WTC11 (cell line): ENCODE measurements at regions of chr10 and their contacts with region 1.

Region 1: DNA sequence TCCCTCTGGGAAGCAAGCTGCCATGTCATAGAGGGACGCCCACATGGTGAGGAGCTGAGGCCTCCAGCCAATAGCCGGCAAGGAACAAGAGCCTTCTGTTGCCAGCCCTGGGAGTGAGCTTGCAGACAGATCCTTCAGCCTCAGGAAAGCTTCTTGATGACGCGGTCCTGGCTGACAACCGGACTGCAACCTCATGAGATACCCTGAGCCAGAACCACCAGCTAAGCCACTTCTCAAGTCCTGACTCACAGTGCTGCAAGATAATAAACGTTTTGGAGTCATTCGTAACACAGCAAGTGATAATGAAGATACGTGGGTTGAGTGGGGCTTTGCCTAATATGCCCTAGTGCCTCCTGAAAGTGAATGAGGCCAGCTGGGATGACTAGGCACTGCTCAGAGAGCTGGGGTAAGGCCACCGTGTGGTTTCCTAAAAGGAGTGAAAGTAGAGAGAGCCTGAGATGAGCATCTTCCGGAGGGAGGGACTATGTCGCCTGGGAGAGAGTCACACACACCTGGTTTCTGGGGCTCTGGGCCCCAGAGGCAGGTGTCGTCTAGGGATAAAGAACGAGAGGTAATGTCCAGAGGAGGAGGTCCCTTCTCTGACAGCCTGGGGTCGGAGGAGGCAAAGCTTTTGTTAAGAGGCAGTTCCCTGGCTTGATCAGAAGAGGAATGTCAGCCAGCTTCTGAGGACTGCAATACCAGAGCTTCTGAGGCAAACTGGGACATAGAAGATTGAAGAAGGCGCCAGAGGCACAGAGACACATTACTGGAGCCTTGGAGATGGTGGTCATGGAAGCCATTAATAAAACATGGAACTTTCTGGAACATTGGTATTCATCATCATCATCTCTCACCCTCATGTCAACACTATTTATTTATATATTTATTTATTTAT is 53.6 kb downstream of the PYROXD2 start:
- DNase-seq: no peak
- ATAC-seq: peak; percentile 80
- H3K4me3 Mint-ChIP-seq: no peak overlapping the region
- H3K27ac Mint-ChIP-seq: no peak overlapping the region
- H3K4me1 Mint-ChIP-seq: peaks cover 42% of the 10 kb centered on the region
- H3K27me3 Mint-ChIP-seq: peaks cover 2% of the 10 kb centered on the region; the same call in 1 of the 2 replicates
- CTCF ChIP-seq: no peak

Region 2: DNA sequence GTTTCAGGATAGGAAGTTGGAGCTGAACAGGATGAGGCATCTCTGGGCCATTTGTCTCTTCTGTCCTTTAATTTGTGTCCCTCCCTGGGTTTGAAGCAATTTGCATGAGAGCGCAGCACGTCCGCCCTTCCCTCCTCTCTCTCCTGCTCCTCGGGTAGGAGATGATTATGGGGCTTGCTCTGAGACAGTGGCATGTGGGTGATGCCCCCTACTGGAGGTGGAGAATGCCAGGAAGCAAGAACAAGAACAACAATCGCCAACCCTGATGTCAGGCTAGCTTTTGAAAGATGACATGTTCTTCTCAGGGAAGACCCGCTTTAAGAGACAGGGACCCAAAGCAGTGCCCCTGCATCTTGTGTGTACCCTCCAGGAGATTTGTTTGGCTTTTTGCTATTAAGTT is 29.5 kb before region 1 on chr10:
- CTCF ChIA-PET with region 1: interaction called, 13 read pairs
- POLR2A ChIA-PET with region 1: no interaction called
- DNase-seq: peak; percentile 62
- ATAC-seq: peak; percentile 98
- H3K4me3 Mint-ChIP-seq: no peak overlapping the region
- H3K27ac Mint-ChIP-seq: no peak overlapping the region
- H3K4me1 Mint-ChIP-seq: peaks cover 9% of the 10 kb centered on the region
- H3K27me3 Mint-ChIP-seq: no peaks in the 10 kb centered on the region
- CTCF ChIP-seq: peak; percentile 38; the same call in 1 of the 2 replicates